ENCODE measurements at regions of chr14 and their contacts with region 1.

Region 1: GRCh38 chr14:100192672-100193416 is 33.4 kb upstream of the DEGS2 start:
- DNase-seq: peak; percentile 100
- ATAC-seq: peak; percentile 100
- H3K4me3 Mint-ChIP-seq: peak overlapping the region; percentile 58
- H3K27ac Mint-ChIP-seq: peak overlapping the region; percentile 90
- H3K4me1 Mint-ChIP-seq: peaks cover 15% of the 10 kb centered on the region
- H3K27me3 Mint-ChIP-seq: no peaks in the 10 kb centered on the region

Region 2: DNA sequence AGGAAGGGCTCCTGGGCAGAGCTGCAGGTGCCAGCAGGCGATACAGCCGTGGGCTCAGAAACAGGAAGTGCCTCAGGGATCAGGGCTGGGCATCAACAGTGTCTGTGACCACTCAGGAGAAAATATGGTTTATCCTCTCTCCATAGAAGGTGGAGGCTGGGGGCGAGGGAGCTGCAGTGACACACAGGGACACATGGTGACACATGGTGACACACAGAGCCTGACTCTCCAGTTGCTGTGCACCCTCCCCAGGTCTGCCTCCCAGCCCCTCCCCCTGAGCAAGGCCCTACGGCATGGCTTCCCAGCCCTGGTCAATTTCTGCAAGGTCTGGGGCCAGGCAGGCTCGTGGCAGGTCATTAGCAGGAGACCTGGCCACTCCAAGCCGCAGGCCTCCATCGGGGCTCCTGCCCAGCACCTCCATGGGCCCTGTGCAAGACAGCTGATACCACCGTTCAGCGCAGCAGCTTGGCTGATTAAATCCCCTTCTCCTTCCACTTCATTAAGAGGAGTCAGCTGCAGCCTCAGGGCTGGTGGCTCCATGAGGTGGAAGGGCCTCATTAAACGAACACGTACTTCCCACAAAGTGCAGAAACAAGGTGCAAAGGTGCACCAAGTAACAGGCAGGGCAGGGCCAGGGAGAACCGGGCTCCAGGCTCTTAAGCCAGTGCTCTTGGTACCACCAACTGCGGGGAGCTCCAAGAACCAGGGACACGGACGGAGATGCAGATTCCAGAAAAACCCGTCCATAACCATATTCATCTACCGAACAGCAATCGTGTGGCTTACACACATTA is 651.0 kb before region 1 on chr14:
- CTCF ChIA-PET with region 1: no interaction called
- DNase-seq: no peak
- ATAC-seq: no peak
- H3K4me3 Mint-ChIP-seq: no peak overlapping the region
- H3K27ac Mint-ChIP-seq: no peak overlapping the region
- H3K4me1 Mint-ChIP-seq: no peaks in the 10 kb centered on the region
- H3K27me3 Mint-ChIP-seq: no peaks in the 10 kb centered on the region

Region 3: DNA sequence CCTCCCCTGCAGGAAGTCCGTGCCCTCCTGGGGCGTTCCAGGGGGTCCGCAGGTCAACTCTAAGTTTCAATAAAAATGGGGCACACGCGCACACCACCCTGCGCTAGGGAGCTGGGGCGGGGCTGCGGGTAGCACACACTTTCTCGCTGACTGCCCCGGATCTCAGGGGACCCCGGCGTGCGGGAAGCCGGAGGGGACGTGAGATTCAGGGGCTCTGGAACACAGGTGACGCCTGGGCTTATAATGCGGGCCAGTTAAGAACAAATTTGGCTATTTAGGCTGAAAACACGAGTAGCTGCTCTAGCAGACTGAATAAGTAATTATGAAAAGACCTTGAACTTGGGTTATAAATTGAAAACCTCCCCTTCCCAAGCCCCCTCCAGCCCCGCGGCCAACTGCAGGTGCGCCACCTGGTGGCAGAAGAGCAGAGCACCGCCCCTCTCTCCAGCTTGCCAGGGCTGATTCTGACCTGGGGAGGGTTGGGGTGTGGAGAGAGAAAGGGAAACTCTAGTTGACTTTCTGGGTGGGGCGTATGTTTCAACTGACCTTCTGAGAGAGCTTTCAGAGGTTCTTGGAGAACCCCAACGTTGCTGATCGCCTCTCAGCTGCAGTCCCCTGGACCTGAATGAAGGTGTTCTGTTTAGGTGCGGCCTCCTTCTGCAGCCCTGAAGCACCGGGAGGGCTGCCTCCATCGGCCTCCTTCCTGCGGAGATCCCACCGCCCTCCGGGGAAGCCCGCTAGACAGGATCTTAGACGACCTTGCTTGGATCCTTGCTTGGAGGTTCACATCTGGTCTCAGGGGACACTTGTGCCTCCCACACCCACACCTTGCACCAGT is 246.0 kb before region 1 on chr14:
- CTCF ChIA-PET with region 1: interaction called, 10 read pairs
- DNase-seq: peak; percentile 56
- ATAC-seq: peak; percentile 87
- H3K4me3 Mint-ChIP-seq: peak overlapping the region; percentile 47
- H3K27ac Mint-ChIP-seq: no peak overlapping the region
- H3K4me1 Mint-ChIP-seq: peaks cover 11% of the 10 kb centered on the region
- H3K27me3 Mint-ChIP-seq: peaks cover 22% of the 10 kb centered on the region

Region 4: GRCh38 chr14:100037353-100037752 is 155.5 kb before region 1 on chr14:
- CTCF ChIA-PET with region 1: interaction called, 10 read pairs
- DNase-seq: no peak
- ATAC-seq: no peak
- H3K4me3 Mint-ChIP-seq: no peak overlapping the region
- H3K27ac Mint-ChIP-seq: no peak overlapping the region
- H3K4me1 Mint-ChIP-seq: peaks cover 5% of the 10 kb centered on the region
- H3K27me3 Mint-ChIP-seq: no peaks in the 10 kb centered on the region

Region 5: GRCh38 chr14:100078991-100079725 is 113.7 kb before region 1 on chr14:
- CTCF ChIA-PET with region 1: interaction called, 10 read pairs
- DNase-seq: peak; percentile 96
- ATAC-seq: peak; percentile 80
- H3K4me3 Mint-ChIP-seq: peak overlapping the region; percentile 76
- H3K27ac Mint-ChIP-seq: peak overlapping the region; percentile 89
- H3K4me1 Mint-ChIP-seq: peaks cover 96% of the 10 kb centered on the region
- H3K27me3 Mint-ChIP-seq: no peaks in the 10 kb centered on the region

Region 6: DNA sequence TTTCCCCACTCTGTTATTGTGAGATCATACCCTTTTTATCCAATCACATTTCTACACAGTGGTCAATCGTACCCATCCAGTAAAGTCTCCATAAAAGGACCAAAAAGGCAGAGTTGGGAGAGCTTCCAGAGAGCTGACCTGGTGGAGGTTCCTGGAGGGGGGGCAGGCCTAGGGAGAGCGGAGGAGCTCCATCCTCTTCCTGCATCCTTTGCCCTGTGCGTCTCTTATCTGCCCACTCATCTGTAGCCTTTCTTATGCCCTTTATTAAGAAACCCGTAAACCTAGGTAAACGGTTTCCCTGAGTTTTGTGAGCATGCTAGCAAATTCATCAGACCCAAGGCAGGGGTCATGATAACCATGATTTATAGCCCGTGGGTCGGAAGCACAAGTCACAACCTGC is 101.5 kb before region 1 on chr14:
- CTCF ChIA-PET with region 1: no interaction called
- DNase-seq: no peak
- ATAC-seq: no peak
- H3K4me3 Mint-ChIP-seq: no peak overlapping the region
- H3K27ac Mint-ChIP-seq: no peak overlapping the region
- H3K4me1 Mint-ChIP-seq: peaks cover 81% of the 10 kb centered on the region
- H3K27me3 Mint-ChIP-seq: no peaks in the 10 kb centered on the region

Region 7: GRCh38 chr14:100203949-100204834 is 11.3 kb after region 1 on chr14:
- CTCF ChIA-PET with region 1: interaction called, 29 read pairs
- DNase-seq: no peak
- ATAC-seq: no peak
- H3K4me3 Mint-ChIP-seq: no peak overlapping the region
- H3K27ac Mint-ChIP-seq: no peak overlapping the region
- H3K4me1 Mint-ChIP-seq: no peaks in the 10 kb centered on the region
- H3K27me3 Mint-ChIP-seq: peaks cover 7% of the 10 kb centered on the region

Region 8: DNA sequence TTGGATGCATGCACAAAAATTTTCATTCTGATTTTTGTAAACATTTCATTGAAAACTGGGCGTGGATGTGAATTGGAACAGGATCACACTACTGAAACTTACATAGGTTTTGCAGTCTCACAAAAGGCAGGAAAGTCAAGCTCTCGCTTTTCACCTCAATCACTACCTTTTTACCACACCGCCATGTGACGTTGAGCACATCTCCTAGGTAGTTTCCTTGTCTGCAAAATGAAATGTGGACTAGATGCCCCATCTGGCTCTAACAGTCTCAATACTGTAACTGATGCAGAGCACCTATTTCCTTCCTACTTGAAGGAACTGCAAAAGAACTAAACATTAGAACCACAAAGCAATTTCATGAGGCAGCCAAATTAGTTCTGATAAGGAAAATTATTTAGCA is 41.7 kb after region 1 on chr14:
- CTCF ChIA-PET with region 1: interaction called, 18 read pairs
- DNase-seq: peak; percentile 48
- ATAC-seq: no peak
- H3K4me3 Mint-ChIP-seq: no peak overlapping the region
- H3K27ac Mint-ChIP-seq: peak overlapping the region; percentile 71
- H3K4me1 Mint-ChIP-seq: peaks cover 38% of the 10 kb centered on the region
- H3K27me3 Mint-ChIP-seq: no peaks in the 10 kb centered on the region